ENCODE measurements at regions of chr2 and their contacts with region 1.

Region 1: GRCh38 chr2:234544659-234545611 is 48.1 kb upstream of the ARL4C start:
- DNase-seq: peak; percentile 69
- ATAC-seq: peak; percentile 75 to 77
- H3K4me3 ChIP-seq: no peak overlapping the region
- H3K27ac ChIP-seq: no peak overlapping the region
- H3K4me1 ChIP-seq: no peaks in the 10 kb centered on the region
- H3K27me3 ChIP-seq: no peaks in the 10 kb centered on the region
- CTCF ChIP-seq: peak; percentile 96

Region 2: GRCh38 chr2:233976690-233977294 is 568.1 kb before region 1 on chr2:
- intact Hi-C with region 1: loop called (anchors 10 kb)
- DNase-seq: no peak
- ATAC-seq: peak; percentile 45 to 70
- H3K4me3 ChIP-seq: no peak overlapping the region
- H3K27ac ChIP-seq: no peak overlapping the region
- H3K4me1 ChIP-seq: no peaks in the 10 kb centered on the region
- H3K27me3 ChIP-seq: no peaks in the 10 kb centered on the region
- CTCF ChIP-seq: peak; percentile 37

Region 3: GRCh38 chr2:234363011-234363487 is 181.9 kb before region 1 on chr2:
- intact Hi-C with region 1: no loop called
- DNase-seq: no peak
- ATAC-seq: peak; percentile 78 to 84
- H3K4me3 ChIP-seq: no peak overlapping the region
- H3K27ac ChIP-seq: no peak overlapping the region
- H3K4me1 ChIP-seq: peaks cover 15% of the 10 kb centered on the region
- H3K27me3 ChIP-seq: no peaks in the 10 kb centered on the region
- CTCF ChIP-seq: no peak

Region 4: GRCh38 chr2:235116885-235117492 is 572.1 kb after region 1 on chr2:
- intact Hi-C with region 1: loop called (anchors 5 kb)
- DNase-seq: no peak
- ATAC-seq: peak in 1 of 2 donors; percentile 19
- H3K4me3 ChIP-seq: no peak overlapping the region
- H3K27ac ChIP-seq: no peak overlapping the region
- H3K4me1 ChIP-seq: no peaks in the 10 kb centered on the region
- H3K27me3 ChIP-seq: peaks cover 7% of the 10 kb centered on the region
- CTCF ChIP-seq: peak; percentile 71

Measured in lower lobe of right lung (tissue), 2 donors.